Endothelial cell of umbilical vein (primary cell): ENCODE measurements at regions of chr12 and their contacts with region 1.

Region 1: GRCh38 chr12:106066051-106066705 is 72.6 kb downstream of the NUAK1 start:
- DNase-seq: peak; percentile 59
- H3K4me3 ChIP-seq: no peak overlapping the region
- H3K27ac ChIP-seq: peak overlapping the region; percentile 36
- H3K4me1 ChIP-seq: peaks cover 47% of the 10 kb centered on the region
- H3K27me3 ChIP-seq: no peaks in the 10 kb centered on the region
- CTCF ChIP-seq: no peak
- POLR2A ChIP-seq: no peak

Region 2: GRCh38 chr12:105852951-105853350 is 213.2 kb before region 1 on chr12:
- CTCF ChIA-PET with region 1: no interaction called
- POLR2A ChIA-PET with region 1: no interaction called
- dilution Hi-C with region 1: no loop called
- intact Hi-C with region 1: loop called (anchors 5 kb)
- DNase-seq: no peak
- H3K4me3 ChIP-seq: no peak overlapping the region
- H3K27ac ChIP-seq: no peak overlapping the region
- H3K4me1 ChIP-seq: peaks cover 23% of the 10 kb centered on the region
- H3K27me3 ChIP-seq: no peaks in the 10 kb centered on the region
- CTCF ChIP-seq: no peak
- POLR2A ChIP-seq: no peak

Region 3: GRCh38 chr12:105960319-105961083 is 105.7 kb before region 1 on chr12:
- CTCF ChIA-PET with region 1: no interaction called
- POLR2A ChIA-PET with region 1: interaction called, 12 read pairs
- dilution Hi-C with region 1: no loop called
- intact Hi-C with region 1: no loop called
- DNase-seq: peak; percentile 50
- H3K4me3 ChIP-seq: no peak overlapping the region
- H3K27ac ChIP-seq: no peak overlapping the region
- H3K4me1 ChIP-seq: peaks cover 4% of the 10 kb centered on the region
- H3K27me3 ChIP-seq: no peaks in the 10 kb centered on the region
- CTCF ChIP-seq: no peak
- POLR2A ChIP-seq: no peak

Region 4: GRCh38 chr12:106030210-106031175 is 35.7 kb before region 1 on chr12:
- CTCF ChIA-PET with region 1: interaction called, 5 read pairs
- POLR2A ChIA-PET with region 1: no interaction called
- dilution Hi-C with region 1: no loop called
- intact Hi-C with region 1: loop called (anchors 1 kb)
- DNase-seq: peak; percentile 83
- H3K4me3 ChIP-seq: peak overlapping the region in 1 of 3 experiments; percentile 18
- H3K27ac ChIP-seq: peak overlapping the region; percentile 97
- H3K4me1 ChIP-seq: peaks cover 25% of the 10 kb centered on the region
- H3K27me3 ChIP-seq: no peaks in the 10 kb centered on the region
- CTCF ChIP-seq: no peak
- POLR2A ChIP-seq: no peak

Region 5: GRCh38 chr12:106090591-106091411 is 24.6 kb after region 1 on chr12:
- CTCF ChIA-PET with region 1: interaction called, 4 read pairs
- POLR2A ChIA-PET with region 1: no interaction called
- dilution Hi-C with region 1: no loop called
- intact Hi-C with region 1: loop called (anchors 1 kb)
- DNase-seq: peak; percentile 96
- H3K4me3 ChIP-seq: no peak overlapping the region
- H3K27ac ChIP-seq: peak overlapping the region; percentile 86
- H3K4me1 ChIP-seq: peaks cover 23% of the 10 kb centered on the region
- H3K27me3 ChIP-seq: no peaks in the 10 kb centered on the region
- CTCF ChIP-seq: no peak
- POLR2A ChIP-seq: no peak